ENCODE measurements at regions of chr11 and their contacts with region 1.

Region 1: GRCh38 chr11:76190376-76190775 is 15.9 kb downstream of the WNT11 start:
- DNase-seq: no peak
- H3K4me3 ChIP-seq: no peak overlapping the region
- CTCF ChIP-seq: no peak
- POLR2A ChIP-seq: no peak

Region 2: GRCh38 chr11:74400606-74401005 is 1789.8 kb before region 1 on chr11:
- intact Hi-C with region 1: loop called (anchors 5 kb)
- DNase-seq: no peak
- H3K4me3 ChIP-seq: no peak overlapping the region
- CTCF ChIP-seq: no peak
- POLR2A ChIP-seq: no peak

Region 3: DNA sequence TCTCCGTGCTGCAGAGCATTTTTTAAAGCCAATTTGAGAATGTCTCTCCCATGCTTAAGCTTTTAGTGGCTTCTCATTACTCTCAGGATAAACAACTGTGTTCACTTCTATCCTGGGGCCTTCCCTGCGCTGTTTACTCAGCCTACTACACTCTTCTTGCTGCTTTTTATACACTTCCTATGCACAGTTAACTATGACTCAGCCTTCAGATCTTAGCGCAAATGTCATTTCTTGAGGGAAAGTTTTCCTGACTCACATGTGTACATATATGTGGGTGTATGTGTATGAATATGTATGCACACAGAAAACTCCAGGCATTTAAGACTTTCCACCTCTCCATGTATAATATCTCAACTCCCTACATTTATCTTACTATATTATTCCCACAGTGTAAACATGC is 180.8 kb after region 1 on chr11:
- intact Hi-C with region 1: no loop called
- DNase-seq: no peak
- H3K4me3 ChIP-seq: no peak overlapping the region
- CTCF ChIP-seq: no peak
- POLR2A ChIP-seq: no peak